ENCODE measurements at regions of chr6 and their contacts with region 1.

Region 1: DNA sequence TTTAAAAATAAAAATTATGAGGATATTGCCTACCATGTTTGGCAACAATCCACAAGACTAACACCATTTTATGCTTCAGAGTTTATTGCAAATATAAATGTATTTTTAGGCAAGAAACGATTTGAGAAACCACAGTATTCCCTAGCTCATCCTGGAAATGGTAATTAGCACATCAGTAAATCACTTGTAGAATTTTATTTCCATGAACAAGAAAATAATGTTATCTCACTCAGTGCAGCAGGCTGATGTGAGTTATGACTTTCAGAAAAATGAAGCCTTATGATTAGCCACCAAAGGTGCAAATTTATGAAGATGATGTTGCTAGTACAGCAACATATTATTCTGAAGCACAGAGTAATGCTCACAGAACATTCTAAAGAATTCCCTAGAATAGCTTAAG is 127.7 kb upstream of the GJE1 start:
- DNase-seq: no peak
- H3K4me3 ChIP-seq: no peak overlapping the region
- H3K27ac ChIP-seq: no peak overlapping the region
- H3K4me1 ChIP-seq: no peaks in the 10 kb centered on the region
- H3K27me3 ChIP-seq: no peaks in the 10 kb centered on the region
- CTCF ChIP-seq: no peak
- POLR2A ChIP-seq: no peak

Region 2: GRCh38 chr6:141653590-141653989 is 351.4 kb before region 1 on chr6:
- intact Hi-C with region 1: no loop called
- DNase-seq: no peak
- H3K4me3 ChIP-seq: no peak overlapping the region
- H3K27ac ChIP-seq: no peak overlapping the region
- H3K4me1 ChIP-seq: no peaks in the 10 kb centered on the region
- H3K27me3 ChIP-seq: no peaks in the 10 kb centered on the region
- CTCF ChIP-seq: no peak
- POLR2A ChIP-seq: no peak

Region 3: DNA sequence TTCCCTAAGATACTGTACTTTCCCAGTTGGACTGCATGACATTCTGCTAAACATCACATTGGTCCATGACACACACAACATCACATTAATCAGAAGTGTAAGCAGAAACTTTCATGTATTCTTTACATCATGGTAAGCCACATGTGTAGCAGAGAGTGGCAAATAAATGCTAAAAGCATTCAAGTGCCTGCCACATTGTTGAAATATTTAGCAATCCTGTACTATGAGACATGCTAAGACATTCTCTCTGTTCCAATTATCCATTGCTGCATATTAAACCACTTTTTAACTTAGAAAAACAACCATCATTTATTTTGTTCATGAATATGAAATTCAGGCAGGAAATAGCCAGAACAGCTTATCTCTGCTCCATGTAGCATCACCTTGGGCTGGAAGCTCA is 80.0 kb before region 1 on chr6:
- intact Hi-C with region 1: loop called (anchors 2 kb)
- DNase-seq: no peak
- H3K4me3 ChIP-seq: no peak overlapping the region
- H3K27ac ChIP-seq: no peak overlapping the region
- H3K4me1 ChIP-seq: no peaks in the 10 kb centered on the region
- H3K27me3 ChIP-seq: no peaks in the 10 kb centered on the region
- CTCF ChIP-seq: no peak
- POLR2A ChIP-seq: no peak

Measured in vagina (tissue), 2 donors.